ENCODE measurements at regions of chr1 and their contacts with region 1.

Region 1: GRCh38 chr1:18668796-18669404 is 38.3 kb downstream of the PAX7 start:
- DNase-seq: peak; percentile 32
- ATAC-seq: peak; percentile 89
- H3K4me3 ChIP-seq: no peak overlapping the region
- H3K27ac ChIP-seq: no peak overlapping the region
- H3K4me1 ChIP-seq: peaks cover 21% of the 10 kb centered on the region
- H3K27me3 ChIP-seq: peaks cover 2% of the 10 kb centered on the region; the same call in 1 of the 2 replicates
- CTCF ChIP-seq: no peak

Region 2: DNA sequence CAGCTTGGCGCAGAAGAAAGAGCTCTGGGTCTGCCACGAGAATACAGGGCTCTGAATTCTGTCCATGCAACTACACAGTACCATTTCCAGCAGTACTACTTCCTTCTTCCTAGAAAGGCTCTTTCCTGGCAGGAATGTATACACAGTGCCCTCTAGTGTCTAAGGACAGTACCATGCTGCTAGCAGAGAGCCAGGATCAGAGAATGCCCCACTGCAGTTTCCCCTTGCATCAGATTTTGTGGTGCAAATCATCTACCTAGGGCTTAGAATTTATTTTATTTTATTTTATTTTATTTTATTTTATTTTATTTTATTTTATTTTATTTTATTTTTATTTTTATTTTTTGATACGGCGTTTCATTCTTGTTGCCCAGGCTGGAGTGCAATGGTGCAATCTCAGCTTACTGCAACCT is 12.5 kb after region 1 on chr1:
- CTCF ChIA-PET with region 1: no interaction called
- POLR2A ChIA-PET with region 1: interaction called, 12 read pairs
- in situ Hi-C with region 1: no loop called
- intact Hi-C with region 1: no loop called
- DNase-seq: peak; percentile 41
- ATAC-seq: peak; percentile 93
- H3K4me3 ChIP-seq: no peak overlapping the region
- H3K27ac ChIP-seq: no peak overlapping the region
- H3K4me1 ChIP-seq: no peaks in the 10 kb centered on the region
- H3K27me3 ChIP-seq: no peaks in the 10 kb centered on the region
- CTCF ChIP-seq: peak; percentile 83

Measured in Panc1 (cell line).